ENCODE measurements at regions of chr18 and their contacts with region 1.

Region 1: GRCh38 chr18:77207540-77207939 is 42.1 kb upstream of the GALR1 start:
- DNase-seq: peak; percentile 39 to 68 (median 43)
- ATAC-seq: peak; percentile 69
- H3K4me3 ChIP-seq: no peak overlapping the region
- H3K4me1 ChIP-seq: peaks cover 10% of the 10 kb centered on the region
- CTCF ChIP-seq: peak; percentile 23

Region 2: DNA sequence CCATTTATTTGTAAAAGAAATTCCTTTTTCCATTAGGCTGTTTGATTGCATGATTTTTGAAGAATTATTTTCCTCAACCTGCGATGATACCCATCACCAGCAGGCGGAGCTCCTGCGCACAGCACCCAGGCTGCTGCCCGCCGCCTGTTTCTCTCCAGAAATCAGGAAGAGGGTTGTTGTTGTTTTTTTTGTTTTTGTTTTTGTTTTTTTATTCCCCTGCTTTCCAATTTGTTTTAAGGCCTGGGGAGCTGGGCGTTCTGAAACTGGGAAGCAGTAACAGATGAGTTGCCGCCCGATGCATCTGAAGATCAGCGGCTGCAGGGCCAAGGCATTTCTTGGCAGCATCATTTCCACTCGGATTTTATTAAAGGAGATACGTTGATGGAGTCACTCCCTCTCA is 207.0 kb before region 1 on chr18:
- intact Hi-C with region 1: loop called in 1 of 2 experiments (anchors 10 kb)
- DNase-seq: peak in 2 of 3 donors; percentile 60 to 66
- ATAC-seq: peak; percentile 75
- H3K4me3 ChIP-seq: no peak overlapping the region
- H3K4me1 ChIP-seq: no peaks in the 10 kb centered on the region
- CTCF ChIP-seq: peak; percentile 93

Measured in mucosa of descending colon (tissue), 3 donors.